ENCODE measurements at regions of chr1 and their contacts with region 1.

Region 1: GRCh38 chr1:111755331-111756123 is at the start of gene DDX20:
- DNase-seq: peak; percentile 98
- H3K4me3 Mint-ChIP-seq: peak within 1 kb of the TSS; percentile 88
- H3K27ac Mint-ChIP-seq: peak within 1 kb of the TSS; percentile 92
- H3K4me1 Mint-ChIP-seq: peaks cover 41% of the 10 kb centered on the region
- H3K27me3 Mint-ChIP-seq: peaks cover 8% of the 10 kb centered on the region
- total RNA-seq, gene DDX20: 18.7 and 24.2 TPM in 2 replicates

Region 2: GRCh38 chr1:111139956-111140679 is 615.4 kb before region 1 on chr1 and contains the starts of genes CEPT1 and DRAM2:
- intact Hi-C with region 1: loop called (anchors 5 kb)
- DNase-seq: peak; percentile 98
- H3K4me3 Mint-ChIP-seq: peak within 1 kb of the TSS; percentile 92
- H3K27ac Mint-ChIP-seq: peak within 1 kb of the TSS; percentile 95
- H3K4me1 Mint-ChIP-seq: peaks cover 33% of the 10 kb centered on the region
- H3K27me3 Mint-ChIP-seq: no peaks in the 10 kb centered on the region
- total RNA-seq, gene CEPT1: 32.4 and 32.9 TPM in 2 replicates
- total RNA-seq, gene DRAM2: 25.8 and 26.5 TPM in 2 replicates

Region 3: GRCh38 chr1:111448918-111449702 is 306.4 kb before region 1 on chr1 and contains the starts of genes ATP5PB and WDR77:
- intact Hi-C with region 1: loop called (anchors 1 kb)
- DNase-seq: peak; percentile 98
- H3K4me3 Mint-ChIP-seq: peak within 1 kb of the TSS; percentile 100
- H3K27ac Mint-ChIP-seq: peak within 1 kb of the TSS; percentile 98
- H3K4me1 Mint-ChIP-seq: peaks cover 68% of the 10 kb centered on the region
- H3K27me3 Mint-ChIP-seq: no peaks in the 10 kb centered on the region
- total RNA-seq, gene ATP5PB: 308 and 325 TPM in 2 replicates
- total RNA-seq, gene WDR77: 60.9 and 65.0 TPM in 2 replicates

Region 4: GRCh38 chr1:111507411-111508201 is 247.9 kb before region 1 on chr1:
- intact Hi-C with region 1: loop called (anchors 1 kb)
- DNase-seq: peak; percentile 88
- H3K4me3 Mint-ChIP-seq: peak overlapping the region; percentile 79
- H3K27ac Mint-ChIP-seq: peak overlapping the region; percentile 94
- H3K4me1 Mint-ChIP-seq: peaks cover 66% of the 10 kb centered on the region
- H3K27me3 Mint-ChIP-seq: no peaks in the 10 kb centered on the region

Region 5: GRCh38 chr1:111690306-111690617 is 65.3 kb before region 1 on chr1:
- intact Hi-C with region 1: no loop called
- DNase-seq: no peak
- H3K4me3 Mint-ChIP-seq: no peak overlapping the region
- H3K27ac Mint-ChIP-seq: peak overlapping the region; percentile 47
- H3K4me1 Mint-ChIP-seq: peaks cover 46% of the 10 kb centered on the region
- H3K27me3 Mint-ChIP-seq: no peaks in the 10 kb centered on the region

Region 6: GRCh38 chr1:111739194-111739924 is 16.2 kb before region 1 on chr1 and contains the start of gene INKA2:
- intact Hi-C with region 1: loop called (anchors 1 kb)
- DNase-seq: peak; percentile 95
- H3K4me3 Mint-ChIP-seq: peak within 1 kb of the TSS; percentile 96
- H3K27ac Mint-ChIP-seq: peak within 1 kb of the TSS; percentile 92
- H3K4me1 Mint-ChIP-seq: peaks cover 21% of the 10 kb centered on the region
- H3K27me3 Mint-ChIP-seq: peaks cover 52% of the 10 kb centered on the region
- total RNA-seq, gene INKA2: 2.4 and 2.6 TPM in 2 replicates

Region 7: GRCh38 chr1:111778541-111779051 is 23.1 kb after region 1 on chr1:
- intact Hi-C with region 1: no loop called
- DNase-seq: no peak
- H3K4me3 Mint-ChIP-seq: no peak overlapping the region
- H3K27ac Mint-ChIP-seq: no peak overlapping the region
- H3K4me1 Mint-ChIP-seq: no peaks in the 10 kb centered on the region
- H3K27me3 Mint-ChIP-seq: peaks cover 20% of the 10 kb centered on the region

Measured in activated CD4-positive, alpha-beta T cell treated with anti-CD3 and anti-CD28 coated beads, Interleukin-2, amount 10 ng/mL, durations not matched to agents 24 days and 14 days (primary cell).